CD4-positive, alpha-beta T cell (primary cell): ENCODE measurements at regions of chr4 and their contacts with region 1.

Region 1: DNA sequence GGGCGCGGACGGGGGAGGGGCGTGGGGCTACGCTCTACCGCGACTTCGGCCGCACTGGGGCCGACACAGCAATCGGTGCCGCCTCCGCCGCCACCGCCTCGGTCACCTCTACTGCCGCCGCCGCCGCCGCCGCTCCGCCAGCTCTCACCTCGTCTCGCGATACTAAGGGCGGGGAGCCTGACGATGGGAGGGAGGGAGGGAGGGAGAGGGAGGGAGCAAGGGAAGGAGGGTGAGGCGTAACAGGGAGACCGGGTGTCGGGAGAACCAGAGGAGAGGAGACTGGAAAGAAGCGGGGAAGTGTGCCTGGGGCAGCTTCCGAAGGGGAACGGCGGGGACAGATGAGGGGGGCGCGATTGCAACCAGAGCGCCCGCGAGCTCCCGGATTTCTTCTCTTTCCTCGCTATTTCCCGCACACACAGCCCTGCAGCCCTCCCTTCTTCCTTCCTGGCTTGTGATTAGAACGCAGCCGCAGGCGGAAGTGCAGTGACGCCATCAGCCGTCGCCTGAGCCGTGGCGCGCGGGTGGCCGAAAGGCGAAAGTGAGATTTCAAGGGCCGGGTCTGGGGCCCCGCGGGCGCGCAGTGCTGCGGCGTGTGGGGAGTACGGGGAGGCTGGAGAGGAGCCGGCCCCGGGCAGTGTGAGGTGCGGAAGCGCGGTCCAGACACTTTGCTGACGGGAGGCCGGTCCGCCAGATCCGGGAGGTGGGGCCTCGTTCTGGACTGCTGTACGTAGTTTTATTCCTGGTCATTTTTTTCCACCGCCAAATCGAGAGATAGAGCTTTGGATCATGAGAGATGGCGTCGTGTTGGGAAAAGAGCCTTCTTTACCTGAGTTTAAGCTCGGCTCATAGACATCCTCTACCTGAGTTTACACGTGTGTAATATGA is at the start of gene ANKRD17:
- DNase-seq: peak; percentile 77 to 95 (median 84)
- ATAC-seq: peak; percentile 68
- H3K4me3 ChIP-seq: peak within 1 kb of the TSS; percentile 74
- H3K4me3 Mint-ChIP-seq: peak within 1 kb of the TSS; percentile 100
- H3K27ac ChIP-seq: peak within 1 kb of the TSS; percentile 95 to 96
- H3K27ac Mint-ChIP-seq: peak within 1 kb of the TSS; percentile 99
- H3K4me1 ChIP-seq: peaks cover 24% of the 10 kb centered on the region
- H3K4me1 Mint-ChIP-seq: peaks cover 81% of the 10 kb centered on the region
- H3K27me3 ChIP-seq: no peaks in the 10 kb centered on the region
- H3K27me3 Mint-ChIP-seq: no peaks in the 10 kb centered on the region
- CTCF ChIP-seq: peak; percentile 7
- total RNA-seq, gene ANKRD17: 31.9 to 34.1 TPM

Region 2: GRCh38 chr4:73069338-73070073 is 189.4 kb before region 1 on chr4 and contains the start of gene COX18:
- CTCF ChIA-PET with region 1: interaction called, 8 read pairs
- POLR2A ChIA-PET with region 1: interaction called, 63 read pairs
- intact Hi-C with region 1: loop called (anchors 1 to 2 kb)
- DNase-seq: peak; percentile 79 to 99 (median 90)
- ATAC-seq: peak; percentile 75
- H3K4me3 ChIP-seq: peak within 1 kb of the TSS; percentile 81
- H3K4me3 Mint-ChIP-seq: peak within 1 kb of the TSS; percentile 95
- H3K27ac ChIP-seq: peak within 1 kb of the TSS; percentile 96 to 99
- H3K27ac Mint-ChIP-seq: peak within 1 kb of the TSS; percentile 99
- H3K4me1 ChIP-seq: peaks cover 27% of the 10 kb centered on the region
- H3K4me1 Mint-ChIP-seq: peaks cover 46% of the 10 kb centered on the region
- H3K27me3 ChIP-seq: no peaks in the 10 kb centered on the region
- H3K27me3 Mint-ChIP-seq: no peaks in the 10 kb centered on the region
- CTCF ChIP-seq: no peak
- total RNA-seq, gene COX18: 5.2 to 6.3 TPM

Region 3: DNA sequence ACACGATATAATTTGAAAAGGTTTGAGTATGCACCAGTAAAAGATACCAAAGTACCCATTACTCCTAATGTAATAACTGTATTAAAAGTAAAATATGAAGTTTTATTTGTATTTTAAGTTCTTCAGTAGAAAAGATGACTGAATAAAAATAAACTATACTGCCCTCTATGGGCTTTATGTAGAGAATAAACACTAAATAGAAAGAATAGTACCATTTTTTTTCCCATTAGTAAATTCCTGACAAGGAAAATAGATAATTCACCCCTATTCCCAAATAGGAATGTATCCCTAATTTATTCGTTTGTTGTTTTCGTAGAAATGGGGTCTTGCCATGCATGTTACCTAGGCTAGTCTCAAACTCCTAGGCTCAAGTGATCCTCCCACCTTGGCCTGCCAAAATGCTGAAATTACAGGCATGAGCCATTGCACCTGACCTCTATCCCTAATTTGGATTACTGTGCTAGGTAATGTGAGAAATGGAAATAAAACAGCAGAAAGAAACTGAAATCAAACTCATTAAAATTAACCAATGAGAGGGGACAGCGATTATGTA is 115.9 kb before region 1 on chr4:
- CTCF ChIA-PET with region 1: interaction called, 6 read pairs
- POLR2A ChIA-PET with region 1: interaction called, 4 read pairs
- intact Hi-C with region 1: loop called (anchors 5 kb)
- DNase-seq: peak in 1 of 14 experiments; percentile 3
- ATAC-seq: no peak
- H3K4me3 ChIP-seq: no peak overlapping the region
- H3K4me3 Mint-ChIP-seq: no peak overlapping the region
- H3K27ac ChIP-seq: no peak overlapping the region
- H3K27ac Mint-ChIP-seq: no peak overlapping the region
- H3K4me1 ChIP-seq: no peaks in the 10 kb centered on the region
- H3K4me1 Mint-ChIP-seq: peaks cover 16% of the 10 kb centered on the region
- H3K27me3 ChIP-seq: no peaks in the 10 kb centered on the region
- H3K27me3 Mint-ChIP-seq: no peaks in the 10 kb centered on the region
- CTCF ChIP-seq: peak; percentile 37

Region 4: GRCh38 chr4:73245955-73246354 is 13.0 kb before region 1 on chr4:
- CTCF ChIA-PET with region 1: interaction called, 17 read pairs
- POLR2A ChIA-PET with region 1: interaction called, 8 read pairs
- intact Hi-C with region 1: no loop called
- DNase-seq: no peak
- ATAC-seq: no peak
- H3K4me3 ChIP-seq: no peak overlapping the region
- H3K4me3 Mint-ChIP-seq: no peak overlapping the region
- H3K27ac ChIP-seq: no peak overlapping the region
- H3K27ac Mint-ChIP-seq: peak overlapping the region; percentile 3
- H3K4me1 ChIP-seq: peaks cover 3% of the 10 kb centered on the region
- H3K4me1 Mint-ChIP-seq: peaks cover 80% of the 10 kb centered on the region
- H3K27me3 ChIP-seq: no peaks in the 10 kb centered on the region
- H3K27me3 Mint-ChIP-seq: no peaks in the 10 kb centered on the region
- CTCF ChIP-seq: no peak

Region 5: DNA sequence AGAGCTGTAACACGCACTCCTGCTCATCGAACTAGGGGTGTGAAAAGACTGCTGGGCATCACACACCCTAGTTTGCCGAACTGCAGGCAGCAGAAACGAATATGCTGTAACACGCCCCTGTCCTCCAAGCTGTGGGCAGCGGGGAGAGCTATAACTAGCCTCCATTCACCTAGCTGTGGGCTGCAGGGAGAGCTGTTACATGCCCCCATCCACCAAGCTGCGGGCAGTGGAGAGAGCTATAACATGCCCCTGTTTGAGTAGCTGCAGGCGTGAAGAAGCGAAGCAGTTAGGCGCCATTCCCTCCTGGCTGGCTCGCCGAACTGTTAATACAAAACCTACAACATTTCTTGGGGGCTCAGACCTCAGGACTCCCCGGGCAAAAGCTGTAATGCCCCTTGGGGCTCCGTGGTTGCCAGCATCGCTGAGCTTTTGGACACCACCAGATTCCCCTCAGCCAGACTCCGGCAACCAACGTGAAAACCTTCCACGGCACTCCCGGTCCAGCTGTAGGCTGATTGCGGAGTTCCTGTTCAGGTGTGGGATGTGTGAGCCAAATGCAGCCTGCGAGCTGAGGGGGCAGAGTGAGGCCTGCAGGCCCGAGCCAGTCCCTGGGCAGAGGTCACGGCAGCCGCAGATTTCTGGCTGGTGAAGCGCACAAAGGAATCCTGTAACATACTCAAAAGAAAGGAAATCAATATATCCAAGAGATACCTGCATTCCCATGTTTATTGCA is 40.8 kb after region 1 on chr4:
- CTCF ChIA-PET with region 1: no interaction called
- POLR2A ChIA-PET with region 1: no interaction called
- intact Hi-C with region 1: no loop called
- DNase-seq: no peak
- ATAC-seq: no peak
- H3K4me3 ChIP-seq: no peak overlapping the region
- H3K4me3 Mint-ChIP-seq: no peak overlapping the region
- H3K27ac ChIP-seq: no peak overlapping the region
- H3K27ac Mint-ChIP-seq: no peak overlapping the region
- H3K4me1 ChIP-seq: no peaks in the 10 kb centered on the region
- H3K4me1 Mint-ChIP-seq: no peaks in the 10 kb centered on the region
- H3K27me3 ChIP-seq: no peaks in the 10 kb centered on the region
- H3K27me3 Mint-ChIP-seq: no peaks in the 10 kb centered on the region
- CTCF ChIP-seq: no peak